Activated CD4-positive, alpha-beta T cell treated with anti-CD3 and anti-CD28 coated beads for 36 hours (primary cell): ENCODE measurements at regions of chr6 and their contacts with region 1.

Region 1: GRCh38 chr6:2634139-2634964 is 116.4 kb downstream of the MYLK4 start:
- DNase-seq: peak; percentile 91
- ATAC-seq: peak; percentile 99
- H3K4me3 Mint-ChIP-seq: peak overlapping the region; percentile 50
- H3K27ac Mint-ChIP-seq: peak overlapping the region; percentile 48
- H3K4me1 Mint-ChIP-seq: peaks cover 8% of the 10 kb centered on the region
- H3K27me3 Mint-ChIP-seq: peaks cover 8% of the 10 kb centered on the region

Region 2: GRCh38 chr6:1596088-1596852 is 1038.1 kb before region 1 on chr6:
- CTCF ChIA-PET with region 1: interaction called, 24 read pairs
- POLR2A ChIA-PET with region 1: no interaction called
- intact Hi-C with region 1: loop called (anchors 1 kb)
- DNase-seq: peak; percentile 78
- ATAC-seq: peak; percentile 88
- H3K4me3 Mint-ChIP-seq: no peak overlapping the region
- H3K27ac Mint-ChIP-seq: no peak overlapping the region
- H3K4me1 Mint-ChIP-seq: peaks cover 2% of the 10 kb centered on the region
- H3K27me3 Mint-ChIP-seq: peaks cover 48% of the 10 kb centered on the region

Region 3: DNA sequence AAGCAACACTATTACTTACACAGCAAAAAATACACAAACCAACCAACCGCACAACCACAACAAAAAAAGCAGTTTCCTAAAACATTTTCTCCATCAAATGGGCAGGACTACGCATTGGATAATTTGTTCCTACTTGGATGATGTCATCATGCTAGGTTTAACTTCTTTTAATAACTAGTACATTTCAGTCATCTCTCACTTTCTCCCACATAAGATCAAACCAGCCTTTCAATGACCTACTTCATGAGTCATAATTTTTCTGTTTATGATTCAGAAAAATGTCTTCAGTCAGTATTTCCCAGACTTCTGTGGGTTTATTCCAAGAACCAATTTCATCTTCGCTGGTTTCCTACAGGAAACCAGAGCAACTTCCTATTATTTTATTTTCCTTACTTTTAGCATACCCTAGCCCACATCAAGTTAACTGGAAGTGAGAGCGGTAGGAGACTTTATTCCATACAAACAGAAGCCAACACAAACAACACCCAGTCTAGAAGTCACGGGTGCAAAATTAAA is 523.1 kb before region 1 on chr6:
- CTCF ChIA-PET with region 1: interaction called, 5 read pairs
- POLR2A ChIA-PET with region 1: no interaction called
- intact Hi-C with region 1: loop called in 1 of 2 experiments (anchors 10 kb)
- DNase-seq: peak; percentile 24
- ATAC-seq: peak; percentile 85
- H3K4me3 Mint-ChIP-seq: peak overlapping the region; percentile 62
- H3K27ac Mint-ChIP-seq: peak overlapping the region; percentile 88
- H3K4me1 Mint-ChIP-seq: peaks cover 31% of the 10 kb centered on the region
- H3K27me3 Mint-ChIP-seq: peaks cover 11% of the 10 kb centered on the region

Region 4: GRCh38 chr6:2353412-2354137 is 280.8 kb before region 1 on chr6:
- CTCF ChIA-PET with region 1: interaction called, 6 read pairs
- POLR2A ChIA-PET with region 1: no interaction called
- intact Hi-C with region 1: loop called (anchors 2 to 10 kb)
- DNase-seq: peak; percentile 80
- ATAC-seq: no peak
- H3K4me3 Mint-ChIP-seq: no peak overlapping the region
- H3K27ac Mint-ChIP-seq: no peak overlapping the region
- H3K4me1 Mint-ChIP-seq: no peaks in the 10 kb centered on the region
- H3K27me3 Mint-ChIP-seq: no peaks in the 10 kb centered on the region

Region 5: GRCh38 chr6:2542858-2543218 is 91.5 kb before region 1 on chr6:
- CTCF ChIA-PET with region 1: interaction called, 4 read pairs
- POLR2A ChIA-PET with region 1: no interaction called
- intact Hi-C with region 1: loop called in 1 of 2 experiments (anchors 5 kb)
- DNase-seq: peak; percentile 58
- ATAC-seq: peak; percentile 93
- H3K4me3 Mint-ChIP-seq: no peak overlapping the region
- H3K27ac Mint-ChIP-seq: no peak overlapping the region
- H3K4me1 Mint-ChIP-seq: peaks cover 17% of the 10 kb centered on the region
- H3K27me3 Mint-ChIP-seq: peaks cover 67% of the 10 kb centered on the region

Region 6: DNA sequence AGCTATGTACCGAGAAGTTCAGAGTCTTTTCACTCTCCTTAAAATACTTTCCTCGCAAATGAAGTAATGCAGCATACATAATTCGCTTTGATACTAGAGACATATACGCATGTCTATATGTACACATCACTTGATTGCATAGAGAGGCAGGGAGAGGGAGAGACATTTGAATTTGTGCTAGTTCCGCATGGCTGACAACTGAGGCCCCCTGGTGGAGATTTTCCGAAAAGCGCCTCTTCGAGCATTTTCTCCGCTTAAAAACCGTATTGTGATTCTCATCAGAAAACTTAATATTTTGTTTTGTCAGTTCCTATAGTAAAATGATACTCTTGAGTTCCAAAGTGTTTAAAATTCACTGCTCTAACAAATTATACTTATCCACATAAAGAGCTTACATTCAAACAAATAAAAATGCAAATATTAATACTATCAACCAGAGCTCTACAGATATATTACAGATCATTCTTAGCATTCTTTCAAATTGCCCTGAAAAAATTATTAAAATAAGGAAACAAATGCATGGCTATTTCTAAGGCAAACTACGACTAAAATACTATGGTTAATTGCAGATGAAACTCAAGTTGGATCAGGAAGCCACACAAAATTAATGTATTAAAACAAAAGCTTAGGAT is 115.7 kb after region 1 on chr6:
- CTCF ChIA-PET with region 1: interaction called, 18 read pairs
- POLR2A ChIA-PET with region 1: no interaction called
- intact Hi-C with region 1: no loop called
- DNase-seq: peak; percentile 83
- ATAC-seq: peak; percentile 66
- H3K4me3 Mint-ChIP-seq: no peak overlapping the region
- H3K27ac Mint-ChIP-seq: no peak overlapping the region
- H3K4me1 Mint-ChIP-seq: peaks cover 3% of the 10 kb centered on the region
- H3K27me3 Mint-ChIP-seq: peaks cover 8% of the 10 kb centered on the region

Region 7: DNA sequence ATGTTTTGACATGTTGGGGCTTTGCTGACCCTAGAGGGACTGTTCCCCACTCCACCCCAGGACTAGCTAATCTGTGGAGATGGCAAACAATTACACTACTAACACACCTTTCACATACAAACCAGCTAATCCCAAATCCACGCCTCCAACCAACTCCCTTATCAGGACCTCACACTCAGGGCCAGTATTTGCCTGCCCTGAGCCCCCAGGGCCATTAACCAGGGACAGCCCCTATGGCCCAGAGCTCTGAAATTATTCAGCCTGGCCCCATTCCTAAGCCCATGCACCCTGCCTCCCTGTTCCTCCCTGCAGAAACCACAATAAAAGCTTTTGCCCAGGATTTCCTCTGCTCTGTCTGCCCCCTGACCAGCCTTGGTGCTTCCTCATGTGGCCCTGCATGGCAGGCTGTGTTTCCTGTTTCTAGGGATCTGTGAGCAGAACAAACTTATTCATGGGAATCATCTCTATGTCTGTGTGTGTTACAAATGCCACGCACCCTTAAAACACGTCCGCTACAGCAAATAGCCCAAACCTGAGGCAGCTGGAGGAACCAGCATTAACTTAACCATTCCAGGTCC is 996.0 kb after region 1 on chr6:
- CTCF ChIA-PET with region 1: no interaction called
- POLR2A ChIA-PET with region 1: no interaction called
- intact Hi-C with region 1: no loop called
- DNase-seq: no peak
- ATAC-seq: no peak
- H3K4me3 Mint-ChIP-seq: no peak overlapping the region
- H3K27ac Mint-ChIP-seq: no peak overlapping the region
- H3K4me1 Mint-ChIP-seq: peaks cover 7% of the 10 kb centered on the region
- H3K27me3 Mint-ChIP-seq: peaks cover 16% of the 10 kb centered on the region